Heart left ventricle (tissue), 16 donors: ENCODE measurements at regions of chr15 and their contacts with region 1.

Region 1: GRCh38 chr15:96070626-96071025 is 259.9 kb upstream of the NR2F2 start:
- DNase-seq: no peak
- ATAC-seq: no peak
- H3K4me3 ChIP-seq: no peak overlapping the region
- H3K27ac ChIP-seq: no peak overlapping the region
- H3K4me1 ChIP-seq: no peaks in the 10 kb centered on the region
- H3K27me3 ChIP-seq: no peaks in the 10 kb centered on the region
- CTCF ChIP-seq: no peak
- POLR2A ChIP-seq: no peak

Region 2: DNA sequence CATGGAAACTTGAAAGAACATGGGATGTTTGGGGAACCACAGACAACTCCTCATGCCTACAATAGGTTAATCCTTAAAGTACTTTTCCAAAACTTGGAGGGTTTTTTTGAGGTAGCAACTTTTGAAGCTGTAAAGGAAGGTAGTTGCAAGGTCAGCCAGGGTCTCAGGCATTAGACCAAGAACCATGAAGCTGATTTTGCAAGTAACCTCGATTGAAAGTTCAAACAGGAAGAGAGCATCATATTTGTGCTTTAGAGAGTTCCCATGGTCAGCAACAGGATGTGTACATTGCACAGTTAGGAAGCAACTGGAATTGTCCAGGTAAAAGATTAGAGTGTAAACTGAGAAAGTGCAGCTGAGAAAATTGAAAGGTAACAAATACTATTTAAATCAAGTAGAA is 60.1 kb after region 1 on chr15:
- intact Hi-C with region 1: loop called in 1 of 10 experiments (anchors 10 kb)
- DNase-seq: no peak
- ATAC-seq: no peak
- H3K4me3 ChIP-seq: no peak overlapping the region
- H3K27ac ChIP-seq: no peak overlapping the region
- H3K4me1 ChIP-seq: no peaks in the 10 kb centered on the region
- H3K27me3 ChIP-seq: no peaks in the 10 kb centered on the region
- CTCF ChIP-seq: no peak
- POLR2A ChIP-seq: no peak